ENCODE measurements at regions of chr19 and their contacts with region 1.

Region 1: DNA sequence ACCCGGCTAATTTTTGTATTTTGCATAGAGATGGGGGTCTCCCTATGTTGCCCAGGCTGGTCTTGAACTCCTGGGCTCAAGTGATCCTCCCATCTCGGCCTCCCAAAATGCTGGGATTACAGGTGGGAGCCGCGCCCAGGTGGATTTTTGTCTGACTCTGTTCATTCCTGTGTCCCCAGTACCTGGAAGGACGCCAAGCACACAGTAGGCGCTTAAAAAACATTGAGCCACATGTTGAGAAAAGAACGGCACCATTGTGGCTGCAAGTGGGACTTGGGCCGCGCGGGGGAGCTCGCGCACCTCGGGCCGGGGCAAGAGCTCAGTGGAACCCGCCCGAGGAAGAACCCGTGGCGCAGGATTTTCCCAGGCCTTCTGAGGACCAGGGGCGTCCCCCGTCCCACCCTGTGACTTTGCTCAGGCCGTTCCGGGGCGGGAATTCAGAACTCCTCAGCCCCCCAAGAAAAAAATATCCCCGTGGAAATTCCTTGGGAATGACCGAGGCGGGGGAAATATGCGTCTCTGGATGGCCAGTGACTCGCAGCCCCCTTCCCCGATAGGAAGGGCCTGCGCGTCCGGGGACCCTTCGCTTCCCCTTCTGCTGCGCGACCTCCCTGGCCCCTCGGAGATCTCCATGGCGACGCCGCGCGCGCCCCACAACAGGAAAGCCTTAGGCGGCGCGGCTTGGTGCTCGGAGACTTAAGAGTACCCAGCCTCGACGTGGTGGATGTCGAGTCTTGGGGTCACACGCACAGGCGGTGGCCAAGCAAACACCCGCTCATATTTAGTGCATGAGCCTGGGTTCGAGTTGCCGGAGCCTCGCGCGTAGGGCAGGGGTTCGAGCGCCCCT is 1.4 kb upstream of the ICAM1 start:
- DNase-seq: peak; percentile 83 to 89
- H3K4me3 ChIP-seq: peak overlapping the region; percentile 59 to 68 (median 63)
- H3K27ac ChIP-seq: peak overlapping the region; percentile 88 to 91
- H3K4me1 ChIP-seq: no peaks in the 10 kb centered on the region
- H3K27me3 ChIP-seq: no peaks in the 10 kb centered on the region
- CTCF ChIP-seq: peak; percentile 88 to 94 (median 93)
- POLR2A ChIP-seq: no peak

Region 2: GRCh38 chr19:9808855-9809824 is 460.4 kb before region 1 on chr19:
- intact Hi-C with region 1: no loop called
- DNase-seq: no peak
- H3K4me3 ChIP-seq: no peak overlapping the region
- H3K27ac ChIP-seq: no peak overlapping the region
- H3K4me1 ChIP-seq: no peaks in the 10 kb centered on the region
- H3K27me3 ChIP-seq: no peaks in the 10 kb centered on the region
- CTCF ChIP-seq: no peak
- POLR2A ChIP-seq: no peak

Region 3: DNA sequence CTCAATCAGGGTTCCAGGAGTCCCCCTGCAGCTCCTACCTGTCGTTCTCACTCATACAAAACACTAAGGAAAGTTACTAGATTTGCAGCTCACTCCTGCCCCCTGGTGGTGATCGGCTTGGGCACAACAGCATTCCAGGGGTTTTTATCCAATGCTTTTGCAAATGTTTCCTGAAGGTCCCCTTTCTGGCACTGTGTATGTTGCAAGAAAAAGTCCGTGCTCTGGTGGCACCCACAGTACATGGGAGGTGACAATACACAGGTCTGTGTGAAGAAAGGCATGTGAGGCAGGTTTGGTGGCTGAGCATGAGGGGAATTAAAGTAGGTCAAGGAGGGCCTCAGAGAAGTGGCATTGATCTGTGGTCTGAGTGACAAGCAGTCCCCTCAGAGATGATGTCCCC is 119.4 kb after region 1 on chr19:
- intact Hi-C with region 1: loop called (anchors 1 kb)
- DNase-seq: peak; percentile 79 to 92
- H3K4me3 ChIP-seq: no peak overlapping the region
- H3K27ac ChIP-seq: no peak overlapping the region
- H3K4me1 ChIP-seq: no peaks in the 10 kb centered on the region
- H3K27me3 ChIP-seq: no peaks in the 10 kb centered on the region
- CTCF ChIP-seq: peak; percentile 91 to 95 (median 91)
- POLR2A ChIP-seq: no peak

Region 4: GRCh38 chr19:10403137-10404021 is 133.8 kb after region 1 on chr19 and contains the start of gene CDC37:
- intact Hi-C with region 1: loop called (anchors 5 kb)
- DNase-seq: peak; percentile 94 to 97
- H3K4me3 ChIP-seq: peak within 1 kb of the TSS; percentile 79 to 97 (median 95)
- H3K27ac ChIP-seq: peak within 1 kb of the TSS; percentile 83 to 88
- H3K4me1 ChIP-seq: peaks cover 16% of the 10 kb centered on the region in 2 donors
- H3K27me3 ChIP-seq: peaks cover 4 to 16% of the 10 kb centered on the region in 2 donors
- CTCF ChIP-seq: no peak
- POLR2A ChIP-seq: peak; percentile 53
- total RNA-seq, gene CDC37: 141 to 213 (median 172) TPM